Activated naive CD4-positive, alpha-beta T cell treated with anti-CD3 and anti-CD28 coated beads for 36 hours (primary cell): ENCODE measurements at regions of chr4 and their contacts with region 1.

Region 1: GRCh38 chr4:54384563-54384962 is 155.5 kb downstream of the PDGFRA start:
- DNase-seq: peak; percentile 40
- H3K4me3 Mint-ChIP-seq: no peak overlapping the region
- H3K27ac Mint-ChIP-seq: no peak overlapping the region
- H3K4me1 Mint-ChIP-seq: no peaks in the 10 kb centered on the region
- H3K27me3 Mint-ChIP-seq: peaks cover 4% of the 10 kb centered on the region

Region 2: DNA sequence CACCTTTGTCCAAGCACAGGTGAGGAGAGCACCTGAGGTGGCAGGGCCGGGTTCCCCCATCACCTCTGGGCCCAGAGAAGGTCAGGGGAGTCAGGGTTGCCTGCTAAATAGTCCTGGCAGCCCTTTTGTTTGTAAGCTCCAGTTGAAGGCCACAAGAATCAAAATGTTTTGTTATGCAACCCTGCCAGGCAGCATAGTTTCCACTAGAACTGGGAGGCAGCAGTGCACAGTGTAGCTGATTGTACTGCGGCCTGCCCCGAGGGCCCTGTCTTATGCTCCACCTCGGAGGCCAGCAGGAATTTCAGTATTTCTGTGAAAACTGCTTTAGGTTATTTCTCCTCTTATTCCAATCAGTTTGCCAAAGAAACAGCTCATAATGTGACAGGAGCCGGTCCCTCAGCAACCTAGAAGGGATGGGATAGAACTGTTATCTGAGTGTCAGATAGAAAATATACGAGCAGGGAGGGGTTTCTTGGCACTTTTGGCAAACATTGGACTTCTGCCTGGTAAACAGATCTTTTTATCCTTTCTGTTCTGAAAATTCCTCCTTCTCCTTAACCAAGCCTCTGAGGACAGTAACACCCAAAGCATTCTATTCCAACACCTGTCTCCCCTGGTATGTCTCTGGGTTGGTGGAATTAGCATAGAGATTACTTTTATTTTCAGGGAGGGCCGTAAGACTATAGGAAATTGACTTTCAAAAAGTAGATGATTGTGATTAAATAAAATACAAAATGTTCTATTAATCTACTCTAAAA is 886.9 kb before region 1 on chr4:
- CTCF ChIA-PET with region 1: no interaction called
- intact Hi-C with region 1: no loop called
- DNase-seq: no peak
- H3K4me3 Mint-ChIP-seq: no peak overlapping the region
- H3K27ac Mint-ChIP-seq: no peak overlapping the region
- H3K4me1 Mint-ChIP-seq: no peaks in the 10 kb centered on the region
- H3K27me3 Mint-ChIP-seq: no peaks in the 10 kb centered on the region

Region 3: DNA sequence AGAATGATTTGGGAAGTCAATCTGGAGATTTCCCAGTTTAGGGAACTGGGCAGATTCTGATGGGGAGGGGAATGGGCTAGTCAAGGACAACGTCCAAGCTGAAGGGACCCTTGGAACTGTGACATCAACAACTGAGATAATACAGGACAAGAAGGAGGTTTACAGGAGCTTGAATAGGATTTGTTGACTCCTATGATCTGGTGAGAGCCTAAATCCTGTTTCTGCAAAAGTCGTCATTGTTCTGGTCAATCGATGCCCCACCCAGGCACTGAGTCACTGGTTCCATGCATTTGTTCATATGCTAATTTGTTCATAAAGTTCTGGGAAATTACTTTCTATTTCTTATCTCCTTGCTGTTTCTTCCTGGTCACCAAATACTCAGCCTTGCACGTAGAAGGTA is 170.8 kb before region 1 on chr4:
- CTCF ChIA-PET with region 1: no interaction called
- intact Hi-C with region 1: no loop called
- DNase-seq: no peak
- H3K4me3 Mint-ChIP-seq: no peak overlapping the region
- H3K27ac Mint-ChIP-seq: no peak overlapping the region
- H3K4me1 Mint-ChIP-seq: peaks cover 4% of the 10 kb centered on the region
- H3K27me3 Mint-ChIP-seq: peaks cover 25% of the 10 kb centered on the region

Region 4: GRCh38 chr4:54423066-54423465 is 38.5 kb after region 1 on chr4:
- CTCF ChIA-PET with region 1: no interaction called
- intact Hi-C with region 1: no loop called
- DNase-seq: no peak
- H3K4me3 Mint-ChIP-seq: no peak overlapping the region
- H3K27ac Mint-ChIP-seq: no peak overlapping the region
- H3K4me1 Mint-ChIP-seq: no peaks in the 10 kb centered on the region
- H3K27me3 Mint-ChIP-seq: peaks cover 18% of the 10 kb centered on the region

Region 5: DNA sequence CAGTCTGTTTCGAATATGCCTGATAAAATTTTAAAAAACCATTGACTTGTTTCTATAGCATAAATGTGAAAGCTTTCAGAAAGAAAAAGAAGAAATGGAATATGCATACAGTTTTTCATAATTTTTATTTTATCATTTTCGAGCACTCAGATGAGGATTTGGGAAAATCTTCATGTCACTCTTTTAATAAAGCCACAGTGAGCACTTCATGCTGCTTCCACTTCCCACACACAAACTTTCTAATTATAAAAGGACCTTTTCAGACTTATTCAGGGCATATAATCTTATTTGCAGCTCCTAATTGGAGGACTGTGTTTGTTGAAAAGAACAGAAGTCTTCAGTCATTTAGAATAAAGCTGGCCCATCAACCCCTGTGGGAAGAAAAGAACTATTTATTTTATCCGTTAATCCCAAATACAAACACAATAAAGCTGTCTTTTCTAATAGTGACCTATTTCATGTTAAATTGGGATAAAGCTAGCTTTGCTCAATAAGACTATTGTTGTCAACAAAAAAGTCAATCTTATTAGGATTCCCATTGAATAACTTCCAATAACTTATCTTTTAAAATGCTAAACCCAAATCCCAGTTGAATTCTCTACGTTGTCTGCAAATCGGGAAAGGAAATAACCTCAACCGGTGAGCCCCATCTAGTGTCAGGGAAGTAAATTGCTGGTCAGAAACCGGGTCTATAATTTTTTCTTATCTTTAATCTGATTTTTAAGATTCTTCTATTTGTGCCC is 56.0 kb after region 1 on chr4:
- CTCF ChIA-PET with region 1: interaction called, 7 read pairs
- intact Hi-C with region 1: loop called (anchors 1 kb)
- DNase-seq: peak; percentile 30
- H3K4me3 Mint-ChIP-seq: no peak overlapping the region
- H3K27ac Mint-ChIP-seq: no peak overlapping the region
- H3K4me1 Mint-ChIP-seq: no peaks in the 10 kb centered on the region
- H3K27me3 Mint-ChIP-seq: peaks cover 28% of the 10 kb centered on the region

Region 6: DNA sequence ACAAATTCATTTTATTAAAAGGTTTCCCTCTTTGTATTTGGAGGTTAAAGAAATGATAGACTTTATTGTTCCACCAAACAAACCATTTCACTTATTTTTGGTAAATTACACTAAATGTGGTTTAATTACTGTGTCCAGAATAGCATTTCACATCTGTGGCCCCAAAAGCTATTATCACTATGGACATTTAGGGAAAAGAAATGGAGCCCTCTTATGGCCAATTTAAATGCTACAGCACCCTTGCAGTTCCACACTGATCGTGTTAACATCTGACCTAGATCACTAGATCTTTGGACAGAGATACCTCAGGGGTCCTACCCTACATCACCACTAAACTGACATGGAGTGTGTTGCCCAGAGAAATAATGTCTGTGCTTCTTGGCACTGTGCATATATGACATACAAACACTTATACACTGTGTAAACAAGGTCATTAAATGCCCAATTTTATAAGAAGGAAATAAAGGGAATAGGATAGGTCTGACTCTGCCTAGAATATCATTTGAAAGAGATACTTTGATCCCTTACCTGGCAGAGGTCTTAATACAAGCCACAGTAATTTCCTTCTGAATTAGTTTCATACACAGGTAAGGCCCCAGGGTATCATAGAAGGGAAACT is 576.9 kb after region 1 on chr4:
- CTCF ChIA-PET with region 1: interaction called, 3 read pairs
- intact Hi-C with region 1: loop called (anchors 1 kb)
- DNase-seq: peak; percentile 15
- H3K4me3 Mint-ChIP-seq: no peak overlapping the region
- H3K27ac Mint-ChIP-seq: no peak overlapping the region
- H3K4me1 Mint-ChIP-seq: peaks cover 26% of the 10 kb centered on the region
- H3K27me3 Mint-ChIP-seq: no peaks in the 10 kb centered on the region